Posterior vena cava (tissue), 2 donors: ENCODE measurements at regions of chr4 and their contacts with region 1.

Region 1: DNA sequence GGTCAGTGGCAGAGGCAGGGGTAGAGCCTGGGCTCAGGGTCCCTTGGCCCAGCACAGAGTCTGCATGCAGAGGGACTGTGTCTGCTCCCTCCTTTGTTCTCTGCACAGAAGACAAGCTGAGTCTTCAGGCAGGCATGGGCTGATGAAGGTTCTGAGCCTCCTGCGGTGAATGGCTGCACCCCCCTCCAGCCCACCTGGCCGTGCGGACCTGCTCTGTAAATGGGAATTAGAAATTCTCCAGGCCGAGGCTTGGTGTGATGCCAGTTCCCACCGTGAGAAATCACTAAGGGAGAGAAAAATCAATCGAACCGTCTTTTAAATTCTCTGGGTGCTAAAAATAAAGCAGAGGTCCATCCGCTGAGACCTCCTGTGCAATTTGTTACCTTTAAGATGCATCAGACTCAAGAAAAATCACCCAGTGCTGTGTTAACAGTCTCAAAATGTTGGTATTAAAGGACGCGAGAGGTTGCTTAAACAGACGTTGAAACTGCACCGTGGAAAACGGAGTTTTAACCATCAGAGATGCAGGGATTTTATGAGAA is 96.0 kb downstream of the WFS1 start:
- DNase-seq: no peak

Region 2: GRCh38 chr4:6382940-6383404 is 17.4 kb after region 1 on chr4:
- intact Hi-C with region 1: loop called in 1 of 2 experiments (anchors 1 kb)
- DNase-seq: peak; percentile 48